Activated CD8-positive, alpha-beta T cell treated with anti-CD3 and anti-CD28 coated beads, Interleukin-2, amount 10 ng/mL, durations not matched to agents 7 days and 5 days (primary cell): ENCODE measurements at regions of chr14 and their contacts with region 1.

Region 1: GRCh38 chr14:106622200-106622745 is 1095.9 kb downstream of the TMEM121 start:
- DNase-seq: peak; percentile 65
- ATAC-seq: peak; percentile 64
- H3K4me3 Mint-ChIP-seq: no peak overlapping the region
- H3K27ac Mint-ChIP-seq: no peak overlapping the region
- H3K4me1 Mint-ChIP-seq: peaks cover 33% of the 10 kb centered on the region
- H3K27me3 Mint-ChIP-seq: peaks cover 44% of the 10 kb centered on the region

Region 2: GRCh38 chr14:106372870-106373652 is 249.2 kb before region 1 on chr14:
- CTCF ChIA-PET with region 1: no interaction called
- POLR2A ChIA-PET with region 1: no interaction called
- DNase-seq: peak; percentile 88
- ATAC-seq: peak; percentile 97
- H3K4me3 Mint-ChIP-seq: no peak overlapping the region
- H3K27ac Mint-ChIP-seq: peak overlapping the region; percentile 26
- H3K4me1 Mint-ChIP-seq: peaks cover 30% of the 10 kb centered on the region
- H3K27me3 Mint-ChIP-seq: peaks cover 19% of the 10 kb centered on the region

Region 3: DNA sequence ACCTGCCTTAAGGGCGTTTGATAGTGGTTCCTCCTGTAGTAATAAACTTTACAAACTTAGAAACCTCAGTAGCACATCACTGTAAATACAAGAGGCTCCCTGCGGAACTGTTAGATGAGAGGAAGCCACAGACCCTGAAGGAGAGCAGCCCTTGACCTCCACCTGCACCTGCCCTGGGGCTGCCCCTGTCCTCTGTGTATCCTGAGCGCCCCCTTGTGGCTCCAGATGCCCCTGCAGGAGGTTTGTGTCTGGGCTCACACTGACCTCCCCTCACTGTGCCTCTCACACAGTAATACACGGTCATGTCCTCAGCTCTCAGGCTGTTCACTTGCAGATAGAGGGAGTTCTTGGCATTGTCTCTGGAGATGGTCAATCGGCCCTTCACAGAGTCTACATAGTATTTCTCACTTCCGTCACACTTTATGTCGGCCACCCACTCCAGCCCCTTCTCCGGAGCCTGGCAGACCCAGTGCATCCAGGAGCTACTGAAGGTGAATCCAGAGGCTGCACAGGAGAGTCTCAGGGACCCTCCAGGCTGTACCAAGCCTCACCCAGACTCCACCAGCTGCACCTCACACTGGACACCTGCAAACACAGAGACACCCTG is 36.1 kb before region 1 on chr14:
- CTCF ChIA-PET with region 1: interaction called, 27 read pairs
- POLR2A ChIA-PET with region 1: no interaction called
- DNase-seq: peak; percentile 78
- ATAC-seq: peak; percentile 87
- H3K4me3 Mint-ChIP-seq: no peak overlapping the region
- H3K27ac Mint-ChIP-seq: no peak overlapping the region
- H3K4me1 Mint-ChIP-seq: peaks cover 17% of the 10 kb centered on the region
- H3K27me3 Mint-ChIP-seq: peaks cover 27% of the 10 kb centered on the region

Region 4: DNA sequence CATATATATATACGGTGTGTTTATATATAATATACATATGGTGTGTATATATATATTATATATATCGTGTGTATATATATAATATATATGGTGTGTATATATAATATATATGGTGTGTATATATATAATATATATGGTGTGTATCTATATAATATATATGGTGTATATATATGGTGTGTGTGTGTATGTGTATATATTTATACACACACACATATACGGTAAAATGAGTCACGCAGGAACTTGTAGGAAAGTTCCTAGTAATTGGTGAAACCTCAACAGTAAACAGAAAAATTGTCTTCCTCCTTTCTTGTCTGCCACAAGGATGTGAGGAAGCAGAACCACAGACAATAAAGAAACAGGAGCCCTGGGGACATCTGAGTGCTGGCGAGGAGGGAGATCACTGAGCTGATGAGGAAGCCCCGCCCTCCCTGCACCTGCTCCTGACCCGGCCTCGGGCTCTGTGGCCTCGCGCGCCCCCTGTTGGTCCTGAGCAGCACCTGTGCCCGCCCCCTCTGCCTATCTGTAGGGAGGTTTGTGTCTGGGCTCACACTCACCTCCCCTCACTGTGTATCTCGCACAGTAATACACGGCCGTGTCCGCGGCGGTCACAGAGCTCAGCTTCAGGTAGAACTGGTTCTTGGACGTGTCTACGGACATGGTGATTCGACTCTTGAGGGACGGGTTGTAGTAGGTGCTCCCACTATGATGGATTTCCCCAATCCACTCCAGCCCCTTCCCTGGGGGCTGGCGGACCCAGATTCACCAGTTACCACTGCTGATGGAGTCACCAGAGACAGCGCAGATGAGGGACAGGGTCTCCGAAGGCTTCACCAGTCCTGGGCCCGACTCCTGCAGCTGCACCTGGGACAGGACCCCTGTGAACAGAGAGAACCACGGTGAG is 16.5 kb before region 1 on chr14:
- CTCF ChIA-PET with region 1: interaction called, 79 read pairs
- POLR2A ChIA-PET with region 1: no interaction called
- DNase-seq: peak; percentile 88
- ATAC-seq: peak; percentile 100
- H3K4me3 Mint-ChIP-seq: no peak overlapping the region
- H3K27ac Mint-ChIP-seq: no peak overlapping the region
- H3K4me1 Mint-ChIP-seq: no peaks in the 10 kb centered on the region
- H3K27me3 Mint-ChIP-seq: peaks cover 70% of the 10 kb centered on the region

Region 5: DNA sequence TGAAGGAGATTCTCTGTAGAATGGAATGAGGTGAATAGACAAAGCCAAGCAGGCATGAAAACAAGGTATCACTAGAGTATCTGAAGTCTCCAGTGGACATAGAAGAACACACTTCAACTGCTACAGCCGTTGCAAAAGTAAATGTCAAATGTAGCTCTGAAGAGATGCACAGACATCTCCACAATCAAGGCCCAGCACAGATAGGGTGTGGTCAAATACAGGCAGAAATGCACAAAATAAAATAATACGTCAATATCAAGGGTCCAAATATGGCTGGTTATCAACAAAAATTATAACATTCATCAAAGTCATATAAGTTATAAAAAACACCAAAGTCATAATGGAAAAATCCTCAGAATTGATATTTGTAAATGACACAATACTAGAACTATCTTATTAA is 11.4 kb after region 1 on chr14:
- CTCF ChIA-PET with region 1: interaction called, 15 read pairs
- POLR2A ChIA-PET with region 1: no interaction called
- DNase-seq: no peak
- ATAC-seq: no peak
- H3K4me3 Mint-ChIP-seq: no peak overlapping the region
- H3K27ac Mint-ChIP-seq: no peak overlapping the region
- H3K4me1 Mint-ChIP-seq: peaks cover 9% of the 10 kb centered on the region
- H3K27me3 Mint-ChIP-seq: peaks cover 21% of the 10 kb centered on the region

Region 6: DNA sequence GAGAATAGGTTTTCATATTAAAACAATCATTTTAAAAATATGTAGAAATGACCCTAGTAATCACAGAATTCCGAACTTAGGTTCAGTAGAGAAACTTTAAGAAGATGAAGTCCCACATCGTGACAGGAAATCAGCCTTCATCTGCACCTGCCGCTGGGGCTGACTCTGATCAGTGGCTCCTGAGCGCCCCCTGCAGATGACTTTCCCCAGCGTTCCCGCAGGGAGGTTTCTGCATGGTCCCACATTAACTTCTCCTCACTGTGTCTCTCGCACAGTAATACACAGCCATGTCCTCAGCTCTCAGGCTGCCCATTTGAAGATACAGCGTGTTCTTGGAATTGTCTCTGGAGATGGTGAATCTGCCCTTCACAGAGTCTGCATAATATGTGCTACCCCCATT is 35.2 kb after region 1 on chr14:
- CTCF ChIA-PET with region 1: interaction called, 17 read pairs
- POLR2A ChIA-PET with region 1: no interaction called
- DNase-seq: peak; percentile 77
- ATAC-seq: peak; percentile 61
- H3K4me3 Mint-ChIP-seq: no peak overlapping the region
- H3K27ac Mint-ChIP-seq: no peak overlapping the region
- H3K4me1 Mint-ChIP-seq: peaks cover 27% of the 10 kb centered on the region
- H3K27me3 Mint-ChIP-seq: peaks cover 25% of the 10 kb centered on the region

Region 7: GRCh38 chr14:106665814-106666213 is 43.5 kb after region 1 on chr14:
- CTCF ChIA-PET with region 1: interaction called, 17 read pairs
- POLR2A ChIA-PET with region 1: no interaction called
- DNase-seq: no peak
- ATAC-seq: no peak
- H3K4me3 Mint-ChIP-seq: no peak overlapping the region
- H3K27ac Mint-ChIP-seq: no peak overlapping the region
- H3K4me1 Mint-ChIP-seq: peaks cover 12% of the 10 kb centered on the region
- H3K27me3 Mint-ChIP-seq: peaks cover 44% of the 10 kb centered on the region

Region 8: GRCh38 chr14:106691601-106692291 is 69.5 kb after region 1 on chr14:
- CTCF ChIA-PET with region 1: interaction called, 12 read pairs
- POLR2A ChIA-PET with region 1: no interaction called
- DNase-seq: peak; percentile 72
- ATAC-seq: peak; percentile 16
- H3K4me3 Mint-ChIP-seq: no peak overlapping the region
- H3K27ac Mint-ChIP-seq: no peak overlapping the region
- H3K4me1 Mint-ChIP-seq: peaks cover 32% of the 10 kb centered on the region
- H3K27me3 Mint-ChIP-seq: peaks cover 10% of the 10 kb centered on the region

Region 9: GRCh38 chr14:106738075-106738474 is 115.8 kb after region 1 on chr14:
- CTCF ChIA-PET with region 1: no interaction called
- POLR2A ChIA-PET with region 1: no interaction called
- DNase-seq: peak; percentile 39
- ATAC-seq: no peak
- H3K4me3 Mint-ChIP-seq: no peak overlapping the region
- H3K27ac Mint-ChIP-seq: no peak overlapping the region
- H3K4me1 Mint-ChIP-seq: peaks cover 16% of the 10 kb centered on the region
- H3K27me3 Mint-ChIP-seq: peaks cover 25% of the 10 kb centered on the region

Region 10: GRCh38 chr14:106842687-106843086 is 220.4 kb after region 1 on chr14:
- CTCF ChIA-PET with region 1: no interaction called
- POLR2A ChIA-PET with region 1: no interaction called
- DNase-seq: no peak
- ATAC-seq: no peak
- H3K4me3 Mint-ChIP-seq: no peak overlapping the region
- H3K27ac Mint-ChIP-seq: no peak overlapping the region
- H3K4me1 Mint-ChIP-seq: peaks cover 30% of the 10 kb centered on the region
- H3K27me3 Mint-ChIP-seq: peaks cover 6% of the 10 kb centered on the region